ENCODE measurements at regions of chr15 and their contacts with region 1.

Region 1: DNA sequence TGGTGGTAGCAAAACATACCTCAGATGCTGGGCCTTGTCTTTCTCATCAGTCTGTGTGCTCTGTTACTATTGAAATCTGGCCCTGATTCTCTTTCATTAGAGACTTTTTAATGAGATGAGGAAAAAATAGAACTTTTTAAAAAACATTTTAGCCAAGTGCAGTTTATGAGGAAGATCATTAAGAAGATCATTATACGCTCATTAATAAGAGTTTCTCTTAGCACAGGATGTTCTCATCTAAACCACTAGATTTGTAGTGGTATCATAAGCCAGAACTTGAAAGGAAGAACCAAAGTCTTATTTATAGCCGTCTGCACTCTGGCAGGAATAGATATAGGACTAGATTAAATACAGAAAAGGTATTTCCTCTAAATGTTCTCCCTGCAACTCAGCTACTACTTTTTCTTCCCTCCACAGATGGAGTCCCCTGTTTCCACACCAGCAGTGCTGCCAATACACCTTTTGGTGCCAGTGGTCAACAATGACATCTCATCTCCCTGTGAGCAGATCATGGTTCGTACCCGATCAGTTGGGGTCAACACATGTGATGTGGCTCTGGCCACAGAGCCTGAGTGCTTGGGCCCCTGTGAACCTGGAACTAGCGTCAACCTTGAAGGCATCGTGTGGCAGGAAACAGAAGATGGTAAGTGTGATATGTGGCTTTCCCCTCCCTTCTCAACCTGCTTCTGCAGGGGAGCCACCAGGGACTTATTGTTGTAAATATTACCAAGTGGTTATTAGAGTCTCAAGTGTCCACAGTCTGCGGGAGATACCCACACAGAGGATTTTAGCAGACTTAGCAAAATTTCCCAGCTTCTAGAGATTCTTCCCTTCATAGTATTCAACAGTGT is 152.8 kb downstream of the RBPMS2 start:
- DNase-seq: no peak
- ATAC-seq: no peak

Region 2: GRCh38 chr15:64596701-64597476 is 25.7 kb before region 1 on chr15:
- intact Hi-C with region 1: loop called (anchors 1 kb)
- DNase-seq: no peak
- ATAC-seq: peak; percentile 91

Measured in sciatic nerve (tissue), 2 donors.